Lower leg skin (tissue), 4 donors: ENCODE measurements at regions of chr9 and their contacts with region 1.

Region 1: GRCh38 chr9:122464633-122465567 is 12.8 kb downstream of the OR1J1 start:
- DNase-seq: peak; percentile 82 to 92
- H3K4me3 ChIP-seq: peak overlapping the region; percentile 4
- CTCF ChIP-seq: peak in 1 of 3 donors; percentile 55
- POLR2A ChIP-seq: no peak

Region 2: DNA sequence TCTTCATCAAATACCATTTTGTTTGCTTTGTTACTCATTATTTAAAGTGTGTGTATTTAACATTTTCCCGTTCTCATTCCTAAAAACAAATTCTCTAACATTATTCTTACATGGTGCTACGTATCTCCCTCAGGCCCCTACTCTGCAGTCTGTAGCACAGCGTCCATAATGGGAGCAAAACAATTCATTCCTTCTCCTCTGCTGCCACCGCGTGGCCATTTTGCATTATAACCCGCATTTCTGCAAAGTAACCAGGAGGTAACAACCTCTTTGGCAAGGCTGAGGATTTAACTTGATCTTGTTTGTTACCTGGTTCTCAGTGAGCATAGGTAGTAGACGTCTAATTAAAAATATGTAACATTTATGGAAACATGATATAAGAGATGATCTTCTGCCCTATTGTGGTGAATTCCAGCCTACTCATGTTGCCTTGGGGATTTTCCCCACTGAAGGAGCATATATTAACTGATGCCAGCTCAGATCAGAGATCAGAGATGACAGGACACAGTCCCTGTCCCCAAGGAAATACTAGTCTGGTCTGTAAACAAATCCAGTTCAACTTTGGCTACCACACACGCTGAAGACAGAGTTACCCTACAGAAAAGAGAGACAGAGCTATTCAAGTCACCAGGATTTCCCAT is 345.5 kb after region 1 on chr9:
- intact Hi-C with region 1: loop called (anchors 2 kb)
- DNase-seq: peak; percentile 60 to 95
- H3K4me3 ChIP-seq: no peak overlapping the region
- CTCF ChIP-seq: peak in 1 of 3 donors; percentile 78
- POLR2A ChIP-seq: no peak

Region 3: GRCh38 chr9:122988919-122989621 is 524.2 kb after region 1 on chr9:
- intact Hi-C with region 1: loop called (anchors 10 kb)
- DNase-seq: no peak
- H3K4me3 ChIP-seq: no peak overlapping the region
- CTCF ChIP-seq: no peak
- POLR2A ChIP-seq: no peak